ENCODE measurements at regions of chr7 and their contacts with region 1.

Region 1: GRCh38 chr7:67364431-67365017 is 367.9 kb downstream of the TYW1 start:
- DNase-seq: peak in 1 of 2 donors; percentile 68
- ATAC-seq: peak; percentile 29 to 47 (median 34)
- H3K4me3 ChIP-seq: no peak overlapping the region
- H3K27ac ChIP-seq: peak overlapping the region; percentile 41
- H3K4me1 ChIP-seq: no peaks in the 10 kb centered on the region
- H3K27me3 ChIP-seq: no peaks in the 10 kb centered on the region
- CTCF ChIP-seq: no peak

Region 2: DNA sequence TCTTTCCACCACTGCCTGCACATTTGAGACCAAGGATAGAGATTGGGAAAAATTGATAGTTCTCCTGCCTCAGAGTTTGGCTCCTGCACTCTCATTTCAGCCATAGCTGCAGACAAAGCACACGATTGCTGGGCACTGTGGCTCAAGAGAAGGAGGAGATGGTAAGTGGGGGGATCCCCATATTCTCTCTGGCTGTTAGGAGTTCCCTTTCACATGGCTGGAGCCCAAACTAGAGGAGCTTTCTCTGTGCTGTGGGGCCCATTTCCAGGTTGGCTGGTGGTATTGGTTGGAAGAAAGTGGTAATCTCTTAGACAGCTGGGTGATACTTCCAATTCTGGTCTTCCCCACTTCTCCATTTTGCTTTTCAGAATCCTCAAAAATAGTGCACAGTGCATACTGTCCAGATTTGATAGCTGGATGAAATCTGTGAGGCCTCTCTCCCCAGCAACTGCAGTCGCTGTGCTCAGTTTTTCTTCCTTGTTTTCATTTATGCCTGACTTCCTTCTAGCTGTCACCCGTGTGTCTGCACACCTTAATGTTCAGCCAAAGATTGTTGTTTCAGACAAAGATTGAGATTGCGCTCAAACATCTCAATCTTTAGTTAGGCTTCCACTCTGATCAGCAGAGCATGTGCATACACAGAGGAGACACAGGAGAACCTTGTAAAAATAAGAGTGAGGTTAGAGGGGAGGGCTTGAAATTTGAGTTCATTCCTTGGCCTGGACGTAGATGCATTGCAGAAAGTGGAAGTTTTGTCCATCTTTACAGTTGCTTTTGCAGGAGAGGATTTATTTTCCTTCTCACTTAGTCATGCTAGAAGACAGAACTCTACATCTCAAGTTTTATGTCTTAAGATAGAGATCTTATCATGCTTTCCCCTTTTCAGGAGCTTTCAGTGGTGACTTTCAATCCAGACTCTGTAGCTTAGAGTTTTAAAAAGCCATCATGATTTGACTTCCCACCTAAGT is 595.4 kb before region 1 on chr7:
- intact Hi-C with region 1: no loop called
- DNase-seq: no peak
- ATAC-seq: no peak
- H3K4me3 ChIP-seq: no peak overlapping the region
- H3K27ac ChIP-seq: no peak overlapping the region
- H3K4me1 ChIP-seq: peaks cover 10% of the 10 kb centered on the region
- H3K27me3 ChIP-seq: no peaks in the 10 kb centered on the region
- CTCF ChIP-seq: no peak

Region 3: GRCh38 chr7:67210567-67210966 is 154.0 kb before region 1 on chr7:
- intact Hi-C with region 1: no loop called
- DNase-seq: no peak
- ATAC-seq: no peak
- H3K4me3 ChIP-seq: no peak overlapping the region
- H3K27ac ChIP-seq: no peak overlapping the region
- H3K4me1 ChIP-seq: no peaks in the 10 kb centered on the region
- H3K27me3 ChIP-seq: no peaks in the 10 kb centered on the region
- CTCF ChIP-seq: no peak

Region 4: GRCh38 chr7:67402280-67402679 is 37.8 kb after region 1 on chr7:
- intact Hi-C with region 1: no loop called
- DNase-seq: no peak
- ATAC-seq: no peak
- H3K4me3 ChIP-seq: no peak overlapping the region
- H3K27ac ChIP-seq: no peak overlapping the region
- H3K4me1 ChIP-seq: no peaks in the 10 kb centered on the region
- H3K27me3 ChIP-seq: peaks cover 0 to 4% (median 3%) of the 10 kb centered on the region in 3 donors
- CTCF ChIP-seq: no peak

Region 5: GRCh38 chr7:67414858-67415257 is 50.3 kb after region 1 on chr7:
- intact Hi-C with region 1: loop called in 1 of 2 experiments (anchors 5 kb)
- DNase-seq: no peak
- ATAC-seq: no peak
- H3K4me3 ChIP-seq: no peak overlapping the region
- H3K27ac ChIP-seq: no peak overlapping the region
- H3K4me1 ChIP-seq: no peaks in the 10 kb centered on the region
- H3K27me3 ChIP-seq: no peaks in the 10 kb centered on the region
- CTCF ChIP-seq: no peak

Region 6: GRCh38 chr7:67429735-67430134 is 65.2 kb after region 1 on chr7:
- intact Hi-C with region 1: no loop called
- DNase-seq: no peak
- ATAC-seq: no peak
- H3K4me3 ChIP-seq: no peak overlapping the region
- H3K27ac ChIP-seq: no peak overlapping the region
- H3K4me1 ChIP-seq: no peaks in the 10 kb centered on the region
- H3K27me3 ChIP-seq: peaks cover 0 to 5% (median 0%) of the 10 kb centered on the region in 3 donors
- CTCF ChIP-seq: no peak